Right ventricle myocardium superior (tissue), 1 donor: ENCODE measurements at regions of chr12 and their contacts with region 1.

Region 1: GRCh38 chr12:15220994-15221885 is at the start of gene RERG:
- DNase-seq: peak; percentile 87
- ATAC-seq: peak; percentile 100
- total RNA-seq, gene RERG: 4.1 TPM

Region 2: GRCh38 chr12:14394317-14395073 is 826.7 kb before region 1 on chr12:
- intact Hi-C with region 1: no loop called
- DNase-seq: no peak
- ATAC-seq: peak; percentile 93

Region 3: GRCh38 chr12:14618983-14619382 is 602.3 kb before region 1 on chr12:
- intact Hi-C with region 1: no loop called
- DNase-seq: no peak
- ATAC-seq: peak; percentile 73

Region 4: GRCh38 chr12:15151161-15152120 is 69.8 kb before region 1 on chr12:
- intact Hi-C with region 1: loop called (anchors 5 kb)
- DNase-seq: no peak
- ATAC-seq: peak; percentile 86